ENCODE measurements at regions of chr5 and their contacts with region 1.

Region 1: GRCh38 chr5:141420855-141421496 is at the start of gene PCDHGA11:
- DNase-seq: peak; percentile 66
- H3K4me3 Mint-ChIP-seq: peak within 1 kb of the TSS; percentile 72
- H3K27ac Mint-ChIP-seq: no peak within 1 kb of the TSS
- H3K4me1 Mint-ChIP-seq: peaks cover 4% of the 10 kb centered on the region
- H3K27me3 Mint-ChIP-seq: peaks cover 68% of the 10 kb centered on the region
- total RNA-seq, gene PCDHGA11: 0.05 TPM in 1 of 2 experiments, not detected in the other

Region 2: DNA sequence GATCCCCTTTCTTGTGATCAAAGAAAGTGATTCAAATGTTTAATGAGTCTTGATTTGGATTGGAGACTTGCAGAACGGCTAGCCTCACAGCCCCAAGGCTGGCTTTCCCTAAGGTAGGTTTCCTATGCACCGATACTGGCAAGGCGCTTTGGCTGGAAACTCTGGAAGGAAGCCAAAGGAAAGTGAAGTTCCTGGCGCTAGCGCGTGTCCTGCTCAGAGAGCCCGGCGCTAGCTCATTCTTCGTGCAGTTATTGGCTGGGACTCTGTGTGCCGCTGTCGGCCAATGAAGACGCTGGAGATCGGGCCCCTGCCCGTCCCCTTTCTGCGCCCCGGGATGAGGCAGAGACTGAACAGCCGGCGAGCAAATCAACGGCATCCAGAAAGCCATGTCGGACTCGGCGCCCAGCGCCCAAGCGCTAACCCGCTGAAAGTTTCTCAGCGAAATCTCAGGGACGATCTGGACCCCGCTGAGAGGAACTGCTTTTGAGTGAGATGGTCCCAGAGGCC is 54.7 kb after region 1 on chr5 and contains the start of gene PCDHGC3:
- CTCF ChIA-PET with region 1: interaction called, 3 read pairs
- POLR2A ChIA-PET with region 1: no interaction called
- intact Hi-C with region 1: loop called (anchors 5 kb)
- DNase-seq: peak; percentile 72
- H3K4me3 Mint-ChIP-seq: peak within 1 kb of the TSS; percentile 79
- H3K27ac Mint-ChIP-seq: no peak within 1 kb of the TSS
- H3K4me1 Mint-ChIP-seq: peaks cover 20% of the 10 kb centered on the region
- H3K27me3 Mint-ChIP-seq: peaks cover 48% of the 10 kb centered on the region
- total RNA-seq, gene PCDHGC3: not detected